Body of pancreas (tissue), 4 donors: ENCODE measurements at regions of chr3 and their contacts with region 1.

Region 1: DNA sequence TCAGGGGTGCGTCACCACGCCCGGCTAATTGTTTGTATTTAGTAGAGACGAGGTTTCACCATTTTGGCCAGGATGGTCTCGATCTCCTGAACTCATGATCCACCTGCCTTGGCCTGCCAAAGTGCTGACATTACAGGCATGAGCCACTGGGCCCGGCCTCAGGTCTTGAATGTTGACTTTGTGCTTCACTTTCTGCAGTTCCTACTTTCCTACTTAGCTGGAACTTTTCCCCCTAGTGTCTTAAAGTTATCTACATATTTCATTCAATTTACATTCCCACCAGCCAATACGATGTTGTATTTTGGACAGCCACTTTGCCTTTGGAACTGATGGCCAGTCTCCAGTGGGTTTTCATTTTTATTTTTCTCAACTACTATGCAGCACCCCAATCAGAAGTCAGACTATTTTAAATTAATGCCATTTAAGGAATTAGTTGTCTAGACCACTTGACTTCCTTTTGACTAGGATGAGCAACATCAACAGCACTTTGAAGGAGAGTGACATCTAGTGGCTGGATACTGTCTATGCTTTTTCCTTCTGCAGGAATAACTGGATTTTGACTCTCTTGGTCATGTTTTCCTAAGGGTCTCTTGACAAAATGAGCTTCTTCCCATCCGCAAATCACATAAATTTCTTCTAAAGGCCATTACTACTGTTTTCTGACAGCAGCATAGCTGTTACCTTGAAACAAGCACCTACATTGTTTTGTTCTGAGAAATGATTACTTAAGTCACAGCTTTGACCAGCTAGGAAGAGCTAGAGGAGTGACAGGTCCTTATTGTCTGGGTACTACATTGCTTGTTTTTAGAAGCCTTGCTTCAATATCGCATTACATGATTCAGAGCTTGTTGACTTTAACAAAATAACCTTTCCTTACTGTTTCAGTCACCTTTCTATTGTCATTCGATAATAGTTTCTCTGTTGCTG is 140.2 kb downstream of the ITPR1 start:
- DNase-seq: peak in 1 of 4 donors; percentile 24
- ATAC-seq: peak; percentile 65
- H3K4me3 ChIP-seq: no peak overlapping the region
- H3K27ac ChIP-seq: no peak overlapping the region
- H3K4me1 ChIP-seq: no peaks in the 10 kb centered on the region
- H3K27me3 ChIP-seq: no peaks in the 10 kb centered on the region
- CTCF ChIP-seq: peak; percentile 77 to 85 (median 82)
- POLR2A ChIP-seq: no peak

Region 2: DNA sequence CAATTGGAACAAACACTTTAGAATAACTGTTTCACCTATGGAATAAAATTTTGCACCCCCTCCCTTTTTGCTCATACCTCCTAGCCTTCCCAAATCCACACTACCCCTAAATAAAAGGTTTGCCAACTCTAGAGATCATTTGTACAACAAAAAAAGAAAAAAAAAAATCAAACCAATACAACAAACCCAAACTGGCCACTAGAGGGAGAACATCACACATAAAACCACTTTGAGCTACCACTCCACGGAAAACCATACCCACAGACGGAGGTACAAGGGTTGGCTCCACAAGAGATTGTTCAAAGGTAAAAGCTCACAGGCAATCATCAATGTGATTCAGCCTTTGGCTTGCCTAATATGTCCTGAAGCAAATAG is 282.6 kb before region 1 on chr3:
- intact Hi-C with region 1: loop called (anchors 5 kb)
- DNase-seq: peak; percentile 37 to 67 (median 42)
- ATAC-seq: peak; percentile 88
- H3K4me3 ChIP-seq: no peak overlapping the region
- H3K27ac ChIP-seq: peak overlapping the region in 1 of 4 donors; percentile 39
- H3K4me1 ChIP-seq: peaks cover 9% of the 10 kb centered on the region
- H3K27me3 ChIP-seq: no peaks in the 10 kb centered on the region
- CTCF ChIP-seq: peak; percentile 55 to 95 (median 74)
- POLR2A ChIP-seq: peak in 1 of 3 donors; percentile 25

Region 3: DNA sequence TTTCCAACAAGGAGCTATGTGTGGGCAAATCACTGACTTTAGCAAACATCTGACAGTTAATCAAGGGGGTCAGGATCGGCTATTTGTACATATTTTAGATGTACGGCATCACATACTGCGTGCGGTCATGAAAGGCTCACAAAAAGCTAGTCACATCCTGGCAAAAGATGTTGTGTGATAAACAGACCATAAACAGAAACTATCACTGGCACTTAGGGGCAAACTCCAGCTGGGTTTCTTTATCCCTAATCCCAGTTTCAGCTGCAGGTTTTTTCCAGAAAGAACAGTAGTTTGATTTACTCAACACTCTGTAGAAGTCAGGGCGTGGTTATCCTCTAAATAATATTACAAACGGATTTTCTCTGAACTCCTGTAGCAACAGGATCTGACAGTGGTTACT is 233.5 kb after region 1 on chr3:
- intact Hi-C with region 1: no loop called
- DNase-seq: peak in 2 of 4 donors; percentile 14 to 36
- ATAC-seq: no peak
- H3K4me3 ChIP-seq: no peak overlapping the region
- H3K27ac ChIP-seq: peak overlapping the region; percentile 91 to 100 (median 98)
- H3K4me1 ChIP-seq: peaks cover 25% of the 10 kb centered on the region
- H3K27me3 ChIP-seq: no peaks in the 10 kb centered on the region
- CTCF ChIP-seq: no peak
- POLR2A ChIP-seq: no peak